GM12878 (cell line): ENCODE measurements at regions of chr6 and their contacts with region 1.

Region 1: GRCh38 chr6:53410508-53411258 is 61.9 kb upstream of the ELOVL5 start:
- DNase-seq: peak; percentile 37
- ATAC-seq: peak; percentile 100
- H3K4me3 ChIP-seq: no peak overlapping the region
- H3K27ac ChIP-seq: no peak overlapping the region
- H3K4me1 ChIP-seq: peaks cover 4% of the 10 kb centered on the region; the same call in 1 of the 2 replicates
- H3K27me3 ChIP-seq: no peaks in the 10 kb centered on the region
- CTCF ChIP-seq: peak; percentile 85 to 92 (median 86)
- EP300 ChIP-seq: 0 out of 4 replicates have a peak, but pooled peaks of 1 of the 2 experiments have one; percentile 14
- POLR2A ChIP-seq: no peak
- RAD21 ChIP-seq: peak; percentile 86

Region 2: DNA sequence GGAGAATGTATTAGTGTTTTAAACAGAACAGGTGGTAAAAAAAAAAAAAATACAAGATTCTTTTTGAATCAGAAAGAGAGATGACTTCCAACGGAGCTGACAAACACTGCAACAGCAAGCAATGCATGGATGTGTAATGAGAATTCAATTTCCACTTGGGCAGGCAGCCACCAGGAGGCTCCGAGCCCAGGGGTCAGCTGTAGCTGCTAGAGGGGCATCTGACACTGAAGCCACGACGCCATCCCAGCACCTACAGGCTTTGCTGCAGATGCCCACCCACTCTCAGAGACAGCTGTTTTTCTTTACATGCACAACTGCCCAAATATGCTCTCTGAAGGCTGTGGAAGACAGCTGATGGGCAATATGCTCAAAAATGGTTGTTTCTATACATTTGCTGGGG is 137.3 kb before region 1 on chr6:
- CTCF ChIA-PET with region 1: interaction called, 16 read pairs
- POLR2A ChIA-PET with region 1: no interaction called
- RAD21 ChIA-PET with region 1: interaction called, 4 read pairs
- SMC1A ChIA-PET with region 1: interaction called, 21 read pairs
- in situ Hi-C with region 1: no loop called
- intact Hi-C with region 1: no loop called
- DNase-seq: no peak
- ATAC-seq: no peak; the same call in 2 of the 3 replicates
- H3K4me3 ChIP-seq: no peak overlapping the region
- H3K27ac ChIP-seq: no peak overlapping the region
- H3K4me1 ChIP-seq: no peaks in the 10 kb centered on the region
- H3K27me3 ChIP-seq: no peaks in the 10 kb centered on the region
- CTCF ChIP-seq: no peak
- EP300 ChIP-seq: no peak
- POLR2A ChIP-seq: no peak
- RAD21 ChIP-seq: no peak

Region 3: DNA sequence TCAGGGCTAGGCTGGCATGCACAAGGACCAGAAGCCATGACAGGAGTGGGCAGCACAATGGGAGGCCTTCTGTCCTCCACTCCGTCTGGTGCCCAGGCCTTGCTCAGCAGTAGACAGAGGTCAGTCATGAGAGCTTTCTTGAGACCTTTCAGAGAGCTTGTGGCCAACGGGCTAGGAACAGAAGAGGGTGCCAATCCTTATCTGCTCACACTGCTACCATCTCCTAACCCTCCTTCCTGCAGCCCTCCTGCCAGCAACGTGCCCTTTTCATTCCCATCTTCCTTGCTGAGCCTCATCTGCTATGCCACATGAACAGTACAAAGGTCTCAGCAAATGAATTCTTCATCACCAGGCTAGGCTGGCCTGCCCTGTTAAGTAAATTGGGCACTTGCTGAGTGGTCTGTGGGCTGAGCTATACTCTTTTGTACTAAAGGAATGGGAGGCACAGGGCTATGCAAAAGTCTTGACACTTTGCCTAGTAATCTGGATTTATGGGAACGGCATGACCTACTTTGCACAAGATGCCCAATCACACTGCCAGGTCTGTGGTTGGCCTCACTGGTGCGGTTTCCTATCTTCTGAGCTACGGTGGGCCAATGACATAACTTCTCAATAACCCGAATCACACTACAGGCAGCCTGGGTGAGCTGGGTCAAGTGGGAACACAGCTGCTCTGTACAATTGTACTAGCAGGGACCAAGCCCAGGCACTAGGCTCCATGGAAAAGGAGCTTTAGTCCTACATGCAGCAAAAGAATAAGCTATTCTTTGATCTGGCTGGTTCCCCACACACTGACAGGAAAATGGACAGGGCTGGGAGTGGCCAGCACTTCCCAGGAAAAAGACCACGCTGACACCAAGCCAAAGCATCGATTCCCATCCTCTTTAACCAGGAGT is 109.8 kb before region 1 on chr6:
- CTCF ChIA-PET with region 1: interaction called, 8 read pairs
- POLR2A ChIA-PET with region 1: no interaction called
- RAD21 ChIA-PET with region 1: interaction called, 7 read pairs
- SMC1A ChIA-PET with region 1: interaction called, 13 read pairs
- in situ Hi-C with region 1: no loop called
- intact Hi-C with region 1: no loop called
- DNase-seq: no peak
- ATAC-seq: peak; percentile 47
- H3K4me3 ChIP-seq: no peak overlapping the region
- H3K27ac ChIP-seq: no peak overlapping the region
- H3K4me1 ChIP-seq: peaks cover 4% of the 10 kb centered on the region
- H3K27me3 ChIP-seq: no peaks in the 10 kb centered on the region
- CTCF ChIP-seq: no peak
- EP300 ChIP-seq: no peak
- POLR2A ChIP-seq: no peak
- RAD21 ChIP-seq: no peak

Region 4: GRCh38 chr6:53342217-53342616 is 68.5 kb before region 1 on chr6:
- CTCF ChIA-PET with region 1: interaction called, 10 read pairs
- POLR2A ChIA-PET with region 1: interaction called, 4 read pairs
- RAD21 ChIA-PET with region 1: interaction called, 7 read pairs
- SMC1A ChIA-PET with region 1: interaction called, 24 read pairs
- in situ Hi-C with region 1: no loop called
- intact Hi-C with region 1: no loop called
- DNase-seq: no peak
- ATAC-seq: peak; percentile 28
- H3K4me3 ChIP-seq: peak overlapping the region; percentile 5; the same call in 1 of the 2 replicates
- H3K27ac ChIP-seq: no peak overlapping the region
- H3K4me1 ChIP-seq: peaks cover 23% of the 10 kb centered on the region
- H3K27me3 ChIP-seq: no peaks in the 10 kb centered on the region
- CTCF ChIP-seq: no peak
- EP300 ChIP-seq: no peak
- POLR2A ChIP-seq: no peak
- RAD21 ChIP-seq: no peak

Region 5: GRCh38 chr6:53426667-53427270 is 16.1 kb after region 1 on chr6:
- CTCF ChIA-PET with region 1: interaction called, 23 read pairs
- POLR2A ChIA-PET with region 1: interaction called, 5 read pairs
- RAD21 ChIA-PET with region 1: interaction called, 18 read pairs
- SMC1A ChIA-PET with region 1: interaction called, 57 read pairs
- in situ Hi-C with region 1: no loop called
- intact Hi-C with region 1: no loop called
- DNase-seq: peak; percentile 74
- ATAC-seq: peak; percentile 90
- H3K4me3 ChIP-seq: no peak overlapping the region
- H3K27ac ChIP-seq: no peak overlapping the region
- H3K4me1 ChIP-seq: peaks cover 4% of the 10 kb centered on the region; the same call in 1 of the 2 replicates
- H3K27me3 ChIP-seq: 0 out of 4 replicates have a peak, but pooled peaks cover 0 to 7% of the 10 kb centered on the region in 2 experiments
- CTCF ChIP-seq: no peak
- EP300 ChIP-seq: peak; percentile 65 to 90; a peak in 3 of 4 replicates
- POLR2A ChIP-seq: no peak
- RAD21 ChIP-seq: no peak